ENCODE measurements at regions of chr17 and their contacts with region 1.

Region 1: DNA sequence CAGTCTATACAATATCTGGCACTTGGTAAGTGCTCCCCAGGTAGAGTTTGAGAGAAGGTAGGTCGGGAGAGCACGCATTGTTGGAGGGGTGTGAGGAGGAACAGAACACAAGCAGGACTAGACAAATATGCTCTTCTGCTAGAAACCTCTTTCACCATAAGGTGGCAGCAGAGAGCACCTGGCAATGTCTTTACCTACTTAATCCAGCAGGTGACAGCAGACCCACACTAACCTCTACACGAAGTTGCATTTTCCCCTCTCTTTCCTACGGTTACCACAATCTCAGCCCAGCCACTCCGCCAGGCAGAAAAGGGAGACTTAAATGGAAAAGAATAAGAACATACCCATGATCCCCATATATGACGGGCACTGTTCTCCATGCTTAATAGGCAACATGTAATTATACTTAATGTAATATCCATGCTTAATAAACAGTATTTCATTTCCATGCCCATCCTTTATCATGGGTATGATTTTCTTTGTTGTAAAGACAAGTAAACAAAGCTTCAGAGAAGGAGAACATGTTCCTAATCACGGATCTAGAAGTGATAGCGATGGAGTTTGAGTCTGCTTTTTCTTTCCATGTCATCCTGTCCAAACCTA is 55.1 kb upstream of the CCL2 start:
- DNase-seq: peak; percentile 59
- ATAC-seq: peak; percentile 90

Region 2: GRCh38 chr17:33811004-33811760 is 388.9 kb before region 1 on chr17:
- intact Hi-C with region 1: no loop called
- DNase-seq: no peak
- ATAC-seq: no peak

Region 3: GRCh38 chr17:34361478-34362061 is 161.5 kb after region 1 on chr17:
- intact Hi-C with region 1: loop called (anchors 1 kb)
- DNase-seq: peak; percentile 94
- ATAC-seq: peak; percentile 90

Measured in Right ventricle myocardium inferior (tissue), 1 donor.